ENCODE measurements at regions of chr5 and their contacts with region 1.

Region 1: GRCh38 chr5:126369967-126370731 is 53.1 kb upstream of the GRAMD2B start:
- DNase-seq: no peak
- ATAC-seq: no peak
- H3K4me3 ChIP-seq: no peak overlapping the region
- H3K27ac ChIP-seq: peak overlapping the region in 1 of 2 donors; percentile 63
- H3K4me1 ChIP-seq: peaks cover 2 to 4% of the 10 kb centered on the region in 2 donors
- H3K27me3 ChIP-seq: no peaks in the 10 kb centered on the region

Region 2: DNA sequence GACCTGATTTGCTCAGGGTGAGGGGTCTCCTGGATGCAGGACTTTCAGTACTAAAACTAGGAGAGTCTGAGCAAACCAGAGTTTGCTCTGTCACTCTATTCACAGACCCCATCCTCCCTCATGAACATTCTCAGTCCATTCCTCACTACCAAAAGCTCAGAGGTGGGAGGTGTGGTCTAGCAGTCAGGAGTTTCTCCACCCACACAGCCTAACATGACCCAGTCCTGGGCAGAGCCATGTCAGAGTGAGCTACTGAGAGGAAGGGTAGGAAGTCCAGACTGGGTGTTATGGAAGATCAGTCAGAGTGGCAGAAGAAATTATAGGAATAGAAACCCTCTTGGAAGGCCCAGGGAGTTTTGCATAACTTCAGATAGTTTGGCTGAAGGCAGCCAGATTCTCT is 60.3 kb before region 1 on chr5:
- intact Hi-C with region 1: no loop called
- DNase-seq: no peak
- ATAC-seq: no peak
- H3K4me3 ChIP-seq: no peak overlapping the region
- H3K27ac ChIP-seq: no peak overlapping the region
- H3K4me1 ChIP-seq: no peaks in the 10 kb centered on the region
- H3K27me3 ChIP-seq: no peaks in the 10 kb centered on the region

Region 3: DNA sequence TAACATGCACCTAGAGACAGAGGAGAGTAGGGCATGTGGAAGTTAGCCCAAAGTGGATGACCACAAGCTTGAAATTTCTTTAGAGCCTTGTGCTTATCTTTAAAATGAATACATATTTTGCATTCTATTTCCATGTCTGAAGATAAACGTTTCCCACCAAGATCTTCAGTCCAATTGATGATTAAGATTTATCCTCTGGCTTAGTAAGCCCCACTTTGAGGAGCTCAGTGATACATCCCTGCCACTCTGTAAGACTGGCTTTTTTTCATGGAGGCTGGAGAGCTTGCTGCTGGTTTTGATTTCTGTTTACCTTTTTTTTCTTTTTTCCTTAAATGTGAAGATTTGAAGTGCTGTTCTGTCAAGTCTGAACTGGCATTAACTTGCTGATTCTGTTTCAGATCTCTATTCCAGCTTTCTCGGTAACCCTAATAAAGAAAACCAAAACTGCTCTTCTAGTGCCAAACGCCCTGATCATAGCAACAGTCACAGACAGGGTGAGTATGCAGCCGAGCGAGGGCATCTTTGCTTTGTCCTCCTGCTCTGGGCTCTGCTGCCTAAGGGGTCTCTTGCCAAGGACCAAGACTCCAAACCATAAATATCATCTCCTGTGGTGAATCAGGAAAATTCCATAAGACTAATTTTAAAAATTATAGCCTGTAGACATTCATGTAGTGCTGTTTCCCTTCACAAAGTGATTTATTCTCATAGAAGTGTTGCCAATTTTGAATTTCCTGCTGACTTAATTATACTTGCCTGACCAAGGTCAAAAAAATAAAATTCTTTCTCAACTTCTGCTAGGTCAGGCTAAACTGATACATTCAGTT is 107.4 kb after region 1 on chr5:
- intact Hi-C with region 1: loop called in 1 of 2 experiments (anchors 5 kb)
- DNase-seq: no peak
- ATAC-seq: peak; percentile 76
- H3K4me3 ChIP-seq: no peak overlapping the region
- H3K27ac ChIP-seq: peak overlapping the region; percentile 48 to 70
- H3K4me1 ChIP-seq: peaks cover 1 to 2% of the 10 kb centered on the region in 2 donors
- H3K27me3 ChIP-seq: no peaks in the 10 kb centered on the region